ENCODE measurements at regions of chr3 and their contacts with region 1.

Region 1: DNA sequence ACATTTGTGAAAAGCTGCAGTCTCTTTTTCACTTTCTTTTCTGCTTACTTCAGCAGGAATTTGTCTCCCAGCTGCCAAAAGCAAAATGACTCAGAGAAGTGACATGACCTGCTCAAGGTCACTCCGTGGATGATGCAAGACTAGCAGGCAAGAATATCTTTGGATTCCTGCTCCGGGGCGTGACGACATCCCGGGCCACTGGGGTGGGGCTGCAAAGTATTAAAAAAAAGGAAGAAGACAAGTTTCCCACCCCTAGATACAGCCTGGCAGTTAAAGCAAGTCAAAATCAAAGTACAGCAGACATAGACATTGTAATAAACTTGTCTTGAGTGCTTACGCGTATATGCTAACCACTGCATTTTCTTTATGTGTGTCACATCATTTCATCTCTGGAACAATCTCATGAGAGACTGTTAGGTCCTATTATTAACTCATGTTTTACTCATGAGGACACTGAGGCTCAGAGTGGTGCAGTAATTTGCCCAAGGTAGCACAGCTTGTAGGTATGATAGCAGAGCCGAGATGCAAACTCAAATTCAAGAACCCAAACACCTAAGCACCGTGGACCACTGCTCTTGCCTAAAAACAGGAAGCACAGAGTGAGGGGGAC is 485.2 kb upstream of the PROK2 start:
- DNase-seq: peak; percentile 90

Region 2: DNA sequence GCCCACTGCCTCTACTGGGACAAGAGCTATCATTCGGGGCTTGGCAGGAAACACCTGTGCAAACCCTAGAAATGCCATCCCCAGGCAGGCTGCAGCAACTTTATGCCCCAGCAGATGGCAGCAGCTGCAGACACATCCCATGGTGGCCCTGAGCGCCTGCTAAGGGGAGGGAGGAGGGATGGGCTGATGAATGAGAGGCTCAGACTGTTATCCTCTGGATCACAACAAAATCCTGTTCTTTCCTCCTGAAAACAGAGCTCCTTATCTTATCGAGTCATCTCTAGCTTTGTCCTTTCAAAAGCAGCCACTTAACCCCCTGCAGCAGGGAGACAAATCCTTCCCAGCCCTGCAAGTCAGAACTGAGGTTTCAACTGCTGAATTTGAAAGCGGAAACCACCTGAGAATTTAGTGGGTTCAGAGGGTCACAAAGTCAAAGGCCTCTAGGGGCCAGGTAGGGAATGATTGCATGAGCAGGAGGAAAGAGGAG is 394.7 kb before region 1 on chr3:
- intact Hi-C with region 1: loop called (anchors 5 kb)
- DNase-seq: peak; percentile 89

Region 3: DNA sequence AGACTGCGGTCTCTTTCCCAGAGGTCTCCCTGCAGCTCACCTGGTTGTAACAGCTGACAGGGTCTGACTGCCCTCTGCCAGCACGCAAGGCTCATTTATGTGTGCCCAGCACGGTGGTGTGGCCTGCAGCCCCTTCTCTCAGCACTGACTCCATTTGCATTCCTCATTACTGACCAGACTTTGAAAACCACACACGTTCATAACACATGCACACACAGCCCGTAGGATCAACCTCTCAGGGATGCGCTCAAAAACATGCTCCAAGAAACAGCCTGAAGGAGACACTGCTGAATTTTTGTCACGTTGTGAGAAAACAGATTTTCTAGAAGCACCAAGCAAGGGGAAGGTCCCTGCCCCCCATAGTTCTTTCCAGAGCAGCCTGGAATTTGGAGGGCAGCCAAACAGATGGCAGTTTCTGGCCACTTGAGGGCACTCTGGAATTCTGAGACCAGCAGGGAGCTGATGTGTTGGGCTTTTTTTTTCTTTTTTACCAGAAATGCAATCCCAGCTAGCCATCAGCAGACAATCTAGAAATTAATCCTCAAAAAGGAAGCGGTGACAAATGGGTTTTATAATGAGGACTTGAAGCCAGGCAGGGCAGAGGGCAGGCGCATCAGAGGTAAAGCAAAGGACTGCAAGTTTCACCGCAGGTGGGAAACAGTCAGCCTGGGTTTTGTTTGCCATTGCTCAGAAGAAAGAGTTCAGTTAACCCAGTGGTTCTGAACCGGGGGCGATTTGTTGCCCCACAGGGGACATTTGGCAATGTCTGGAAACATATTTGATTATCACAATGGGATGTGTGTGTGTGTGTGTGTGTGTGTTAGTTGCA is 314.7 kb before region 1 on chr3:
- intact Hi-C with region 1: loop called (anchors 1 kb)
- DNase-seq: peak; percentile 81

Region 4: DNA sequence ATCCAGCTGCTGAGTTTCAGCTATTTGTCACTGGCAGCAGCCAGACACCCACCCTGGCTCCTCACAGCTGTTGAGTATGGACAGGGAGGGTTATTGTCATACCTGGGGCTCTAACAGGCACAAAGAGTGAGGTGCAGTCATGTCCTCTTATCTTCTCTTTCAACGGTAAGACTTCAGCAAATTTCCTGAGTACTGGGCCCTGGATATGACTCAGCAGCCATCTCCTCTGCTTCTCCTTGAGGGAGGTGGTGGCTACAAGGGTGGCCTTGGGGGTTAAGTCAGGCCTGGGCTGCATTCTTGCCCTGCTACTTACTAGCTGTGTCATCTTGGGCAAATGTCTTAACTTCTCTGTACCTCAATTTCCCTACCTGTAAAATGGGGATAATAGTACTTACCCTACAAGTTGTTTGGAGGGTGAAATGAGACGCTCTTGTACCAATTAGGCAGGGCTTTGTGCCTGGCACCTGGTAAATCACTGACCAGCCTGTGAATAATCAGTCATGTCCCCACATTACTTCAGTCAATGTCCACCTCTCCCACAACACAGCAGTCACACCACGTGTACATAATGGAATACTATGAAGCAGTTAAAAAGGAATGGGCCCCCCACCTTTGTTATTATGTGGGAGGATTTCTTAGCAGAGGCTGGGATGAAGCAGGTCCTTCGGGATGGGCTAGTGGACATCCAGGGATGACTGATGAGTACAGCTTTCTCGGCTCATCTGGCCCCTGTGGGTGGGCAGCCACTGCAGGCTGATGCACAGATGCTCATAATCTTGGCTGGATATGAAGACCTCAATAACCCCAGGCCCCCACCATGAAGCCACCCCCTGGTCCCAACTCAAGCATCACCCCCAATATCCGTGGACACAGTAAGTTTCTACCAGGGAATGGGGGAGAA is 49.3 kb after region 1 on chr3:
- intact Hi-C with region 1: loop called (anchors 5 kb)
- DNase-seq: no peak

Region 5: DNA sequence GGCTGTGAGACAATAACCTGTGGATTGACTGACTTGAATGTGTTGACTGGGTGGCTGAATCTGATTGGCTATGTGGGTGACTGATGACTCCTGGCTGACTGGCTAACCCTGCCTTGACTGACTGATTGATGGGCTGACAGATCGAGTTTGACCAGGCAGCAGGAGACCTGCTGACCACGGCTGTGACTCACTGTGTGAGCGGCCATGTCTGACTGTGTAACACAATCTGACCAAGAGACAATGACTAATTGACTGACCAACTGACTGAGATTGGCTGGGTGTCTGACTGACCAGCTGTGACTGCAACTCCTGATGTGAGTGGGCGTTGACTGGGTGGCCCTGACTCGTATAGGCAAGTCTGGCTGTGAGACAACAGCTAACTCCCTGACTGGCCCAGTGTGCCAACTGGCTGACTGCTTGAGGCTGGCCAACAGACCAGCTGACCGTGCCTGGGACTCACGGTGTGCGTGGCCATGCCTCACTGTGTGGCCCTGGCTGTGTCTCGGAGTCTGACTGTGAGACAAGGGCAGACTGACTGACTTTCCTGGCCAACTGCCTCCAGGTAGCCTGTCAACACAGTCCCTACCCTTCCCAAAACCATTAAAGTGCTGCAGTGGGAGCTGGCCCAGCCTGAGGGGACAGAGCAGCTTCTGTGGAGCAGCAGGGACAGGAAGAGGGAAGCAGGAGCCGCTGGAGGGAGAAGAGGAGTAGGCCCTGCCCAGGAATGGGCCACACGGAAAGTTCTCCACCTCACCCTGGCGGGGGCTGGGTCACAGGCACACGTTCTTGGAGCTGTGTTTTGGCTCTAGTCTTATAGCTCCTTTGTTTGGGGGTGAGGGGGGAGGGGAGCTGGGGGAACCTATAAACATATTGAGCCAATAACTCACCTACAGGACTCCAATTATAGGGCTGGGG is 69.2 kb after region 1 on chr3:
- intact Hi-C with region 1: no loop called
- DNase-seq: no peak

Region 6: DNA sequence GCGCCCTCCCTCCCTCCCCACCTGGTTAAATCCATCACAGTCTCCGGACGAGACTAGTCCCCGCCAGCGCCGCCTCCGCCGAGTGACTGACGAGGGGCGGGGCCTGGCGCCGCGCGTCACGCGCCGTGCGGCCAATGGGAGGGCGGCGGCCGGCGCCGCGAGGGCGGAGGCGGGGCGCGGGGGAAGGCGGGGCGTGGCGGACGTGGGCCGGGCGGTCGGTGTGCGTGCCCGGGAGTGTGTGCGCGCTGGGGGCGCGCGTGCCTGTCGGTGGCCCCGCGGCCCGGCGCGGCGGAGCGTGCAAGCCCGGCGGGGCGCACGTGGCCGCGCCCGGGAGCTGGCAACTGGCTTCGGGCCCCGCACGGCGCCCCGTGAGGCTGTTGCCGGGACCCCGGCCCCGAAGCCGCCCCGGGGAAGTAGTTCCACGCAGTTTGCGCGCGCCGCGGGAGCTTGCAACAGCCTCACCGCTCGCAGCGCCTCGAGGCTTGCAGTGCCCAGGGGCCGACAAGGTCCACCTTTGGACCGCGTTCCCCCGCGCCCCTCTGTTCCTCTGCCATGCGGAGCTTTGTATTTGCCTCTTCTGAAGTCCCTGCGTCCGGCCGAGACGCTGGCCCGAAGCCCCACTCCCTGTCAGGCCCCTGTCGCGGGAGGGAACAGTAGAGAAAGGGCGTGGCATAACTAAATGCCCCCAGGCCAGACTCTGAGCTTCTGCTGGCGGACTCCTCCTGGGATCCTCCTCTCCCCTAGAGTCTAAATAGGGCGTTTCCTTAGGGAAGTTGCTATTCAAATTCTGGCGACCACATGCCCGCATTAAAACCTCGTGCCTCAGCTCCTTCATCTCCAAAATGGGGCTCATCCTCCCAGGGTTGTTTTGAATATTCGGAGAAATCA is 177.1 kb after region 1 on chr3:
- intact Hi-C with region 1: loop called (anchors 5 kb)
- DNase-seq: peak; percentile 96

Region 7: DNA sequence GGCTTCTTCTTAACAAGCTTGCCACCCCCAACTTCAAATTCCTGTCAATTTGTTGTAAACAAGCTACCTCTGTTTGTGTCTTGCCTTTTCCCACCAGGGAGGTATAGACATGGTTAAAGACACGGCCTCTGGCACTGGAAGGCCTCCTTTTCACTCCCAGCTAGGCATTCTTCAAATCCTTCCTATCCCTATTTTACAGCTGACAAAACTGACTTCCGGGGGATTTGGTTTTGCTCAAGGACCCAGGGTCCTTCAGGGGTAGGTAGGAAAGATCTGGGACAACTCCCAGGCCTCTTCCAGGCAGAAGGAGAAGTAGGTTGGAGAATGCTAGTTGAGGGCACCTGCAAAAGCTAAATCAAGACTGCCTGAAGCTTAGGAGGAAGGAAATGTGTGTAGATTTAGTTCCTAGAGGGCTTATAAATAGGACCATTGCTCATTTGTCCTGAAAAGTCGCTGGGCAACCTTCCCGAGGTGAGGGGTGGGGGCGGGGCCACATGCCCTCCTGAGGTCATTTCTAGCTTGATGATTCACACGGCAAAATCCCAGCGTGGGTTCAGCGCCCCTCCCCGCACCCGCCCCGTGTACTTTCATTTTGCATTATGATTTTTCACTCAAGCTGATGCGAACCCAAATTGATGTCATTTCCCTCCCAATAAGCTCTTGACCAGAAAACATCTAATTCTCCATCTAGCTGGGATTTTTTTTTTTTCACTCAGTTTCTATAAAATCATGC is 212.6 kb after region 1 on chr3:
- intact Hi-C with region 1: loop called (anchors 5 kb)
- DNase-seq: peak; percentile 84

Measured in cardiac septum (tissue), 1 donor.